H1 (cell line): ENCODE measurements at regions of chr11 and their contacts with region 1.

Region 1: GRCh38 chr11:67996622-67997474 is 7.0 kb downstream of the UNC93B1 start:
- DNase-seq: peak; percentile 85 to 99
- H3K4me3 ChIP-seq: peak overlapping the region; percentile 49 to 68 (median 60); a peak in 7 of 8 replicates
- H3K27ac ChIP-seq: no peak overlapping the region
- H3K4me1 ChIP-seq: peaks cover 0 to 9% (median 8%) of the 10 kb centered on the region in 4 experiments; a peak in 5 of 7 replicates
- H3K27me3 ChIP-seq: no peaks in the 10 kb centered on the region
- CTCF ChIP-seq: no peak
- EP300 ChIP-seq: no peak
- POLR2A ChIP-seq: 0 out of 3 replicates have a peak, but pooled peaks of 1 of the 2 experiments have one; percentile 17
- RAD21 ChIP-seq: no peak

Region 2: GRCh38 chr11:67983951-67984350 is 12.9 kb before region 1 on chr11:
- CTCF ChIA-PET with region 1: interaction called, 13 read pairs
- POLR2A ChIA-PET with region 1: no interaction called
- DNase-seq: no peak
- H3K4me3 ChIP-seq: no peak overlapping the region
- H3K27ac ChIP-seq: no peak overlapping the region
- H3K4me1 ChIP-seq: peaks cover 0 to 2% (median under 1%) of the 10 kb centered on the region in 4 experiments; a peak in 1 of 7 replicates
- H3K27me3 ChIP-seq: no peaks in the 10 kb centered on the region
- CTCF ChIP-seq: no peak
- EP300 ChIP-seq: no peak
- POLR2A ChIP-seq: no peak
- RAD21 ChIP-seq: no peak